Endothelial cell of umbilical vein (primary cell): ENCODE measurements at regions of chr11 and their contacts with region 1.

Region 1: GRCh38 chr11:7892840-7893254 is 38.2 kb downstream of the OR10A6 start:
- DNase-seq: peak; percentile 68
- H3K4me3 ChIP-seq: no peak overlapping the region
- H3K27ac ChIP-seq: no peak overlapping the region
- H3K4me1 ChIP-seq: peaks cover 4% of the 10 kb centered on the region
- H3K27me3 ChIP-seq: peaks cover 12 to 17% of the 10 kb centered on the region in 2 experiments
- CTCF ChIP-seq: peak; percentile 61 to 66
- POLR2A ChIP-seq: no peak

Region 2: GRCh38 chr11:7904914-7905313 is 12.1 kb after region 1 on chr11:
- CTCF ChIA-PET with region 1: interaction called, 10 read pairs
- POLR2A ChIA-PET with region 1: no interaction called
- dilution Hi-C with region 1: no loop called
- intact Hi-C with region 1: no loop called
- DNase-seq: peak; percentile 38
- H3K4me3 ChIP-seq: no peak overlapping the region
- H3K27ac ChIP-seq: no peak overlapping the region
- H3K4me1 ChIP-seq: no peaks in the 10 kb centered on the region
- H3K27me3 ChIP-seq: peaks cover 2 to 8% of the 10 kb centered on the region in 2 experiments
- CTCF ChIP-seq: peak in 1 of 2 donors; percentile 11
- POLR2A ChIP-seq: no peak

Region 3: GRCh38 chr11:8070417-8071115 is 177.7 kb after region 1 on chr11:
- CTCF ChIA-PET with region 1: no interaction called
- POLR2A ChIA-PET with region 1: no interaction called
- dilution Hi-C with region 1: no loop called
- intact Hi-C with region 1: loop called (anchors 5 kb)
- DNase-seq: peak; percentile 21
- H3K4me3 ChIP-seq: no peak overlapping the region
- H3K27ac ChIP-seq: no peak overlapping the region
- H3K4me1 ChIP-seq: peaks cover 3% of the 10 kb centered on the region
- H3K27me3 ChIP-seq: peaks cover 8 to 10% of the 10 kb centered on the region in 2 experiments
- CTCF ChIP-seq: peak in 1 of 2 donors; percentile 18
- POLR2A ChIP-seq: no peak